Calu3 (cell line): ENCODE measurements at regions of chr5 and their contacts with region 1.

Region 1: DNA sequence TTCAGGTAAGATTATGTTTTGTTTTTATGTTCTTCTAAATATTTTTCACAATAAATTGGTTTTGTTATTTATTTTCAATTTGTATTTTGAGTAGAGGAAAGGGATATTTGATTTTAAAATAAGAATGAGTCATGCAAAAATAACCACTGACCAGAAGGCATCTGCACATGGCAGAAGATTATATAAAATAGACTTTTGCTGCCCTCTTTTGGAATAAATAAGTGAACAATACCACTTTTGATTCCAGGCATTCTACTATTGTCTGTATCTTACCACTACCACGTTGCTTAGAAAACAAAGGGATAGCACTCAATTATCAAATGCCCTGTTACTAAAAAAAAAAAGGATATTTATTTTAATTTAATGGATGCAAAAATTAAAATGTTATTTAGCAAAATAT is 227.3 kb upstream of the ITGA1 start:
- DNase-seq: no peak
- H3K4me3 Mint-ChIP-seq: no peak overlapping the region
- H3K27ac Mint-ChIP-seq: no peak overlapping the region
- H3K4me1 Mint-ChIP-seq: no peaks in the 10 kb centered on the region
- H3K27me3 Mint-ChIP-seq: no peaks in the 10 kb centered on the region
- CTCF ChIP-seq: peak; percentile 44

Region 2: DNA sequence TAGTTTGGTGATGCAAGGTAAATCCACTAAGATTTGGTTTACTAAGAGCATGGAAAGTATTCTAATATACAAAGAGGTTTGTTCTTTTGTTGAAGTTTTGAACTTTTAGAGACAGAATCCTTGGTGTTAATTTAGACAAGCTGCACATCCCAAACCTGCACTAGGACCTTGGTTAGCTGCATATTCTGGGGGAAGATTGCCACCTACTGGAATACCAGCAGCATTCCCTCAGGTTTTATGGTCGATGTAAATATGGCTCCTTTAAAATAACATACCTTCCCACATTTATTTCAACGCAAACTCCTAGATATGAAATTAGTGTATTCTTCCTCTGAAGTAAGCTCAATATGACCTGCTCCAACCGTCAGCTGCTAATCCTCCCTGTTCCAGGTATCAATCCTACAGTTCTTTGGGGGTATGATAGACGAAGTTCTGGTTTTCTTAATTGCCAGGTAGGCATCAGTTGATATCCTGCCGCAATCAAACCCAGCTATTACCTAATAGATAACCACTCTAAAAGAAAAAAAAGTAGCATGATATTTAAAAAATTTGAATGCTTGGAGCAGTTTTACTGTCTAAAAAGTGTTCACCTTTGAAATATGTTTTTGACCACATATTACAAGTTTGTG is 553.0 kb before region 1 on chr5:
- CTCF ChIA-PET with region 1: no interaction called
- intact Hi-C with region 1: loop called (anchors 5 kb)
- DNase-seq: peak; percentile 54
- H3K4me3 Mint-ChIP-seq: peak overlapping the region; percentile 43
- H3K27ac Mint-ChIP-seq: no peak overlapping the region
- H3K4me1 Mint-ChIP-seq: peaks cover 15% of the 10 kb centered on the region
- H3K27me3 Mint-ChIP-seq: no peaks in the 10 kb centered on the region
- CTCF ChIP-seq: peak; percentile 56

Region 3: GRCh38 chr5:52043137-52043536 is 517.2 kb before region 1 on chr5:
- CTCF ChIA-PET with region 1: no interaction called
- intact Hi-C with region 1: no loop called
- DNase-seq: no peak
- H3K4me3 Mint-ChIP-seq: no peak overlapping the region
- H3K27ac Mint-ChIP-seq: no peak overlapping the region
- H3K4me1 Mint-ChIP-seq: no peaks in the 10 kb centered on the region
- H3K27me3 Mint-ChIP-seq: no peaks in the 10 kb centered on the region
- CTCF ChIP-seq: no peak

Region 4: GRCh38 chr5:52374286-52374685 is 186.1 kb before region 1 on chr5:
- CTCF ChIA-PET with region 1: no interaction called
- intact Hi-C with region 1: loop called (anchors 5 kb)
- DNase-seq: no peak
- H3K4me3 Mint-ChIP-seq: no peak overlapping the region
- H3K27ac Mint-ChIP-seq: no peak overlapping the region
- H3K4me1 Mint-ChIP-seq: no peaks in the 10 kb centered on the region
- H3K27me3 Mint-ChIP-seq: no peaks in the 10 kb centered on the region
- CTCF ChIP-seq: no peak

Region 5: DNA sequence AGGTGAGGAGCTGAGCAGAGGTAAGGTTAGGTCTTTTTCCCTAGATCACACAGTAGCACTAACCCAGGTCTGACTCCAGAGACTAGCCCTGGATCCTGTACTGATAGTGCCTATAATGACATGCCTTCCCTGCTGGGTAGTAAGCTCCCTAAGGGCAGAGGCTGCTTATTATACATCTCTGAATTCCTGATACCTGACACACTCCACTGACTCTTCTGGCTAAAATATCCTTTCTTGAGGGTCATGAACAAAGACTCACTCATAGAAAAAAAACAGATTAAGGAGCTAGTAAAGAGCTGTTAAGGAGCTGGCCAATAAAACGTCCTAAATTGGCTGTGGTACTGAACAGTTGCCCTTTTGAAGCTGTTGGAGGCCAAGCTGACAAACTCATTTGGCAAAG is 78.4 kb after region 1 on chr5:
- CTCF ChIA-PET with region 1: no interaction called
- intact Hi-C with region 1: no loop called
- DNase-seq: no peak
- H3K4me3 Mint-ChIP-seq: no peak overlapping the region
- H3K27ac Mint-ChIP-seq: no peak overlapping the region
- H3K4me1 Mint-ChIP-seq: no peaks in the 10 kb centered on the region
- H3K27me3 Mint-ChIP-seq: no peaks in the 10 kb centered on the region
- CTCF ChIP-seq: no peak

Region 6: GRCh38 chr5:52710310-52710971 is 150.1 kb after region 1 on chr5:
- CTCF ChIA-PET with region 1: no interaction called
- intact Hi-C with region 1: no loop called
- DNase-seq: no peak
- H3K4me3 Mint-ChIP-seq: peak overlapping the region; percentile 17
- H3K27ac Mint-ChIP-seq: peak overlapping the region; percentile 62
- H3K4me1 Mint-ChIP-seq: peaks cover 42% of the 10 kb centered on the region
- H3K27me3 Mint-ChIP-seq: no peaks in the 10 kb centered on the region
- CTCF ChIP-seq: no peak